Head of caudate nucleus (tissue), 42 donors: ENCODE measurements at regions of chr7 and their contacts with region 1.

Region 1: DNA sequence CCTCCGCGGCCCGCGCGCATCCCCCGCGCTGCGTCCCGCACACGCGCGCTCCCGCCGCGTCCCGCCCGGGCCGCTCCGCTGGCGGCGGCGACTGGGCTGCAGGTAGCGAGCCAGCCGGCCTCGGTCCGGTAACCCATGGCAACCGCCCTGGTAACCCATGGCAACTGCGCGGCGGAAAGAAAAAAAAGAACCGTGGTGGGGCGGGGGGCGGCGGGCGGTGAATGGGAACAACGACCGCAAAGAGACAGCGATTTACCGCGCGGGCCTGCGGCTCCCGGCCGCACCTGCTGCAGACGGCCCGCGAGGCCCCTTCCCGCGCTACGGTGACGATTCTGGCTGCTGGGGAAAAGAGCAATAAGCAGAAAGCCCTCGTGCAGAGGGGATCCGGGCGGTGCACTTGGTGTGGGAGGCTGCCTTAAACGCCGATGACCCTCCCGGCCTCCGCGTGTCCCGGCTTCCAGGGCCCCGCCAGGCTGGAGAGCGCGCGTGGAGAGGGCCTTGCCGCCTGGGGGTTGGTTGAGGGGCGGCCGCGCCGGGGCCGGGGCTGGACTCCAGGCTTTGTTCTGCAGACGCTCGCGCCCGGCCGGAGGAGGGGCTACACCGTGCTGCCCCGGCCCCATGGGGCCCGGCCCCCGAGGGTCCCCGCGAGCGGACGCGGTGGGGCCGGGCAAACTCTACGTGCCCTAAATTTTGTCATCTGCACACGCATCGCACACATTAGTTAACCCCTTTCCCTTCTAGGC is 84.7 kb downstream of the SNX10 start:
- DNase-seq: peak in 37 of 42 donors; percentile 18 to 77 (median 52)

Region 2: DNA sequence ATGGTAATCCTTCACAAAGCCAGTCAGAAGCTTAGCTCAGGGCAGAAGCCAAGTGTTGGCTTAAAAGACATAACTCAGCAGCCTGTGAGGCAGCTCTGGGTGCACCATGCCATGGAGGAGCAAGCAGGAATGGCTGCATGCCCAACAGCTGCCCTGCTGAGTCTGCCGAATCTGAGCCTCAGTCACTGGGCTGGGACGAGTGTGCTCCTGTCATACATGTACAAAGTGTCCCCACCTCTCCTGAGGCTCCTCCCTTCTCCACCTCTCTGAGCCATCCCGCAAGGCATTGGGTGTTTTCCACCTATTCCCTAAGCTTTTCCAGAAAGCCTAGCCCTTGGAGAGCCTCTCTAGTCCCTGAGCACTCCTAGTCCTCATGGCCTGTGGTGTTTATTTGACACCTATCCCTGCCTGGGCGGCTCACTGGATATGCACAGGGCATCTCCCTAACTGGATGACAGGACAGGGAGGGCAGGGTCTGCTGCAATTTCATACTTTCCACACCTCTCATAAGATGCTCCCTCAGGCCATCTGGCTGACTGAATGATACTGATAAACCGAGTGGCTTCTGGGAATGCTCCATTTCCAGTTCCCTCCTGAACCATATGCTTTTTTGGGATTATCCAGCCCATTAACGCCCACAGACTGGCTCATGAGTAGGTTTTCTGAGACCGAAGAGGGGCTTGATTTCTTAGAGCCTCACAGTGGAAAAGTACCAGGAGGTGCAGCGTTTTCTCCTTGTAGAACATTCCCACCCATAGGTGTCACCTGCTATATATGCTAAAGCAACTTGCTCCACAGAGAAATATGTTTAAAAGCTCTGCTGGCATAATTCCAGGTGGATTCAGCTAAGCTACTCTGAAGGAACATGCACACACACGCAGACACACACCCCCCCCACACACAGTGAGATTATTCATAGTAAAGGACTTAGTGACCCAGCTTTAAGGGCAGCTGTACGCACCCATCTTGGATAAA is 114.6 kb after region 1 on chr7:
- intact Hi-C with region 1: loop called (anchors 10 kb)
- DNase-seq: peak in 10 of 42 donors; percentile 21 to 62 (median 32)